B cell (primary cell): ENCODE measurements at regions of chr6 and their contacts with region 1.

Region 1: GRCh38 chr6:130069485-130069884 is 51.1 kb downstream of the L3MBTL3 start:
- DNase-seq: no peak
- ATAC-seq: no peak
- H3K4me3 ChIP-seq: no peak overlapping the region
- H3K4me3 Mint-ChIP-seq: no peak overlapping the region
- H3K27ac ChIP-seq: no peak overlapping the region
- H3K27ac Mint-ChIP-seq: no peak overlapping the region
- H3K4me1 ChIP-seq: no peaks in the 10 kb centered on the region
- H3K4me1 Mint-ChIP-seq: peaks cover 3% of the 10 kb centered on the region
- H3K27me3 ChIP-seq: no peaks in the 10 kb centered on the region
- H3K27me3 Mint-ChIP-seq: no peaks in the 10 kb centered on the region
- CTCF ChIP-seq: no peak

Region 2: DNA sequence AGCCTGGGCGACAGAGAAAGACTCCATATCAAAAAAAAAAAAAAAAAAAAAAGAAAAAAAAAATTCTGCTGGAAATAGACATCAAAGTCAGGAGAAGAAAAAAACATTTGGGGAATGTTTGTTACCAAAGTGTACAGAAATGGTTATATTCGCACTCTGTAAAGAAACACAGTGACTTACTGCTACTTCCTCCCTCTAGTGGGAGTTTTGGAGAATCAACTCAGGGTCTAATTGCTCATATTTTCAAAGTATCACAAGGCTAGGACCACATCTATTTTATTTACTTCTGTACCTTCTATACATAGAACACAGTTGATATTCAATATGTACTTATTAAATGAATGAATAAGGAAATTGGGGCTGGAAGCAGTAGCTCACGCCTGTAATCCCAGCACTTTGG is 1528.0 kb after region 1 on chr6:
- CTCF ChIA-PET with region 1: no interaction called
- POLR2A ChIA-PET with region 1: no interaction called
- intact Hi-C with region 1: loop called (anchors 10 kb)
- DNase-seq: peak; percentile 13
- ATAC-seq: no peak
- H3K4me3 ChIP-seq: no peak overlapping the region
- H3K4me3 Mint-ChIP-seq: no peak overlapping the region
- H3K27ac ChIP-seq: no peak overlapping the region
- H3K27ac Mint-ChIP-seq: no peak overlapping the region
- H3K4me1 ChIP-seq: no peaks in the 10 kb centered on the region
- H3K4me1 Mint-ChIP-seq: no peaks in the 10 kb centered on the region
- H3K27me3 ChIP-seq: no peaks in the 10 kb centered on the region
- H3K27me3 Mint-ChIP-seq: no peaks in the 10 kb centered on the region
- CTCF ChIP-seq: peak; percentile 21